ENCODE measurements at regions of chr1 and their contacts with region 1.

Region 1: GRCh38 chr1:246566128-246566812 is at the starts of genes CNST and TFB2M:
- DNase-seq: peak; percentile 99
- H3K4me3 ChIP-seq: peak within 1 kb of the TSS; percentile 92
- H3K27ac ChIP-seq: peak within 1 kb of the TSS; percentile 76
- H3K4me1 ChIP-seq: peaks cover 48% of the 10 kb centered on the region
- CTCF ChIP-seq: no peak
- total RNA-seq, gene CNST: 14.6 and 17.1 TPM in 2 replicates
- total RNA-seq, gene TFB2M: 10.7 and 15.0 TPM in 2 replicates

Region 2: GRCh38 chr1:246506674-246507481 is 59.4 kb before region 1 on chr1 and contains the start of gene SMYD3:
- CTCF ChIA-PET with region 1: interaction called, 3 read pairs
- POLR2A ChIA-PET with region 1: interaction called, 3 read pairs
- intact Hi-C with region 1: loop called (anchors 2 kb)
- DNase-seq: peak; percentile 89
- H3K4me3 ChIP-seq: peak within 1 kb of the TSS; percentile 95
- H3K27ac ChIP-seq: no peak within 1 kb of the TSS
- H3K4me1 ChIP-seq: peaks cover 13% of the 10 kb centered on the region
- CTCF ChIP-seq: peak; percentile 31; the same call in 1 of the 2 replicates
- total RNA-seq, gene SMYD3: 26.6 and 28.9 TPM in 2 replicates

Region 3: DNA sequence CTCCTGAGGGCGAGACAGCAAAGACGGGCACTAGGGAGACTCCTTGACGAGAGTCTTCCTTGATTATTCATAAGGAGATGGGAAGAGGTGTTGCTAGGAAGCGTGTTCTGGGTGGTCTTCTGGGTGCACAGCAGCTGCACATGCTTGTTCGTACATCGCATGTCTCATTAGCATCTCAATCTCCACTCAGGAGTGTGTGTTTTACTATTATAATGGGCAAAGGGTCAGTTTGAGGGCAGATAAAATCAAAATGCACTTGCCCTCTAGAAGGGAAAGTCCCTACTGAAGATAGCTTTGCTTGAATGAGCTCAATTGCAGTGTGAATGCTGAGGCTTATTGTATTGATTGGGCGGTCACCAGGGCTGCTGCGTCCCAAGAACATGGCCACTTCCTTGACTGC is 107.8 kb after region 1 on chr1:
- CTCF ChIA-PET with region 1: no interaction called
- POLR2A ChIA-PET with region 1: no interaction called
- intact Hi-C with region 1: no loop called
- DNase-seq: no peak
- H3K4me3 ChIP-seq: no peak overlapping the region
- H3K27ac ChIP-seq: no peak overlapping the region
- H3K4me1 ChIP-seq: no peaks in the 10 kb centered on the region
- CTCF ChIP-seq: no peak

Region 4: DNA sequence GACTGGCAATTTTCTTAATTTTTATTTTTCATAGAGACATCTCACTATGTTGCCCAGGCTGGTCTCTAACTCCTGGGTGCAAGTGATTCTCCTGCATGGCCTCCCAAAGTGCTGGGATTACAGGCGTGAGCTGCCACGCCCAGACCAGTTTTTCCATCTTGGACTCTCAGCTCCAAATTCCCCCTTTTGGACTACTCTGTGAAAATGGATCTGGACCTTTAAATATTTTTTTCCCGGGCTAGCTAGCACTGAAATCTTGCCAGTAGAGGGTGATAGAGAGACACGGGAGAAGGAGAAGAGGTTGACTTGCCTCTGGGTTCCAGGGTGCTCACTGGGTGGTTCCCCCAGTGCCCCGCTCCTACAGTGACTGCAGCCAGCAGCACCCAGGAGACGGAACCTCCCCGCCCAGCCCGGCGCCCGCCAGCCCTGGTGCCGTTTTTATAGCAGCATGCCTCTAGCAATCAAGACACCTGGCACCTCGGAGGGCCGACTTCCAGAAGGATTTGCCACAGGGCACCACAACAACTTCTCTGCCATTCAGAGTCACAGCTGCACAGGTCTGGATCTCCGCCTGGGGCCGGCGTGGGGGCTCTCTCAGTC is 123.2 kb after region 1 on chr1:
- CTCF ChIA-PET with region 1: no interaction called
- POLR2A ChIA-PET with region 1: no interaction called
- intact Hi-C with region 1: loop called (anchors 5 kb)
- DNase-seq: peak; percentile 77
- H3K4me3 ChIP-seq: no peak overlapping the region
- H3K27ac ChIP-seq: no peak overlapping the region
- H3K4me1 ChIP-seq: no peaks in the 10 kb centered on the region
- CTCF ChIP-seq: peak; percentile 90

Region 5: DNA sequence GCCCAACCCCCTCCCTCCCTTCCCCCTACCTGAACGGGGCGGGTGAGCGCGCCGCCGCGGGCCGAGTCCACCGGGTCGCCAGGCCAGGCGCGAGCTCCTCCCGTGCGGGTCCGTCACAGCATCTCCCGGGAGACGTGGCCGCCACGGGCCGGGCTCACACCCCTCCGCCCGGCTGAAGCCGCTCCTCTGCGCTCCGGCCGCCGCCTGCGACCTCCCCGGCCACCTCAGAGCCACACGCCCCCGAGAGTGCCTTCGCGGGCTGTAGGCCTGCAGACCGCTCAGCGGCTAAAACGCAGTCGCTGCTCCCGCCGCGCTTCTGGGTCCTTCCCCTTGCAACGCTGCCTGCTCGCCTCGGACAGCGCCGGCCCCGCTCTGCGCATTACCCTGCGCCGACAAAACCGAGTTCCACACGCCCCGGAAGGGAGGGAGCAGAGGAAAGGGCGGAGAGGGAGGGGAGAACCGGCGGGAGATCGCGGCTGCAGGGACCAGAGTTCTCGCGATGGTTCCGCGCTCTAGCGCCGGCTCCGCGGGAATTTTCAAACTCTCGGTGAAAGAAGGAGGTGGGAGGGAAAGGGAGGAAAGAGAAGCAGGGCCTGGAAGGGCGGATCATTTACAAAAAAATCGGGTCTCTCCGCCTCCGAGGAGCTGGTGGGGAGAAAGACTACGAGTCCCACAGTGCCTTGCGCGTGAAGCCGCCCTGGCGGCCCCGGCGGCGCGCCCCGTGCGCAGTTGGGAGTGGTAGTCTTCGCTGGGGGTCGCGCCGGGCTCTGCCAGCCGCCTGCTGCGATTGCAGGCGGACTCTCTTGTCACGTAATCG is 365.5 kb after region 1 on chr1 and contains the start of gene AHCTF1:
- CTCF ChIA-PET with region 1: no interaction called
- POLR2A ChIA-PET with region 1: no interaction called
- intact Hi-C with region 1: loop called (anchors 1 kb)
- DNase-seq: peak; percentile 97
- H3K4me3 ChIP-seq: peak within 1 kb of the TSS; percentile 95
- H3K27ac ChIP-seq: peak within 1 kb of the TSS; percentile 88
- H3K4me1 ChIP-seq: peaks cover 10% of the 10 kb centered on the region
- CTCF ChIP-seq: no peak
- total RNA-seq, gene AHCTF1: 36.4 and 38.5 TPM in 2 replicates

Measured in OCI-LY7 (cell line).